ENCODE measurements at regions of chr9 and their contacts with region 1.

Region 1: DNA sequence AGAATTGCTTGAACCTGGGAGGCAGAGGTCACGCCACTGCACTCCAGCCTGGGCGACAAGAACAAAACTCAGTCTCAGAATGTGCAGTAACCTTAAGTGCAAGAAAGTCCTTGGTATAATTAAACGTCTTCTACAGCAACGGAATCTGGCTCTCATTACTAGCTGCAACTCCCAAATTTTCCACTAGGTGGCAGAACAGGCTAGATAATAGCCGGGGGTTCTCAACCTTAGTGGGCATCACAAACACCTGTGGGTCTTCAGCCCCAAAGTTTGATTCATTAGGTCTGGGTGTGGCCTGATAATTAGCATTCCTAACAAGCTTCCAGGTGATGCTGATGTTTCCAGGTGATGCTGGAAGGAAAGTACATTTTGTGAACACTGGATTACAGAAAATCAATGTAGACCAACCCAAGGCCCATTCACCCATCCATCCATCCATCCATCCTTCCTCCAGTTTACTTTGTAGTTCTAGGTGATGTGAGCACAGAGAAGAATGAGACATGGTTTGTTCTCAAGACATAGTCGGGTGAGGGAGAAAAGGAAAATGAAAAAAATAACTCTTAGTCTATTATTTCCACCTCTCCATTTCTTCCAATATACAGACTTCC is 37.3 kb downstream of the FBXW2 start:
- DNase-seq: peak; percentile 26
- ATAC-seq: peak; percentile 85
- H3K4me3 Mint-ChIP-seq: no peak overlapping the region
- H3K27ac Mint-ChIP-seq: no peak overlapping the region
- H3K4me1 Mint-ChIP-seq: peaks cover 24% of the 10 kb centered on the region
- H3K27me3 Mint-ChIP-seq: no peaks in the 10 kb centered on the region
- CTCF ChIP-seq: peak; percentile 71

Region 2: GRCh38 chr9:120619751-120620655 is 135.9 kb before region 1 on chr9:
- CTCF ChIA-PET with region 1: interaction called, 10 read pairs
- POLR2A ChIA-PET with region 1: no interaction called
- intact Hi-C with region 1: loop called (anchors 1 kb)
- DNase-seq: no peak
- ATAC-seq: peak; percentile 79
- H3K4me3 Mint-ChIP-seq: no peak overlapping the region
- H3K27ac Mint-ChIP-seq: no peak overlapping the region
- H3K4me1 Mint-ChIP-seq: peaks cover 2% of the 10 kb centered on the region
- H3K27me3 Mint-ChIP-seq: no peaks in the 10 kb centered on the region
- CTCF ChIP-seq: peak; percentile 99

Region 3: GRCh38 chr9:120783602-120784047 is 27.7 kb after region 1 on chr9:
- CTCF ChIA-PET with region 1: no interaction called
- POLR2A ChIA-PET with region 1: no interaction called
- intact Hi-C with region 1: no loop called
- DNase-seq: no peak
- ATAC-seq: no peak
- H3K4me3 Mint-ChIP-seq: no peak overlapping the region
- H3K27ac Mint-ChIP-seq: no peak overlapping the region
- H3K4me1 Mint-ChIP-seq: peaks cover 18% of the 10 kb centered on the region
- H3K27me3 Mint-ChIP-seq: no peaks in the 10 kb centered on the region
- CTCF ChIP-seq: no peak

Region 4: GRCh38 chr9:120936011-120936763 is 180.3 kb after region 1 on chr9:
- CTCF ChIA-PET with region 1: interaction called, 15 read pairs
- POLR2A ChIA-PET with region 1: no interaction called
- intact Hi-C with region 1: loop called (anchors 1 kb)
- DNase-seq: peak; percentile 72
- ATAC-seq: peak; percentile 37
- H3K4me3 Mint-ChIP-seq: peak overlapping the region; percentile 71
- H3K27ac Mint-ChIP-seq: peak overlapping the region; percentile 82
- H3K4me1 Mint-ChIP-seq: peaks cover 63% of the 10 kb centered on the region
- H3K27me3 Mint-ChIP-seq: no peaks in the 10 kb centered on the region
- CTCF ChIP-seq: peak; percentile 52

Region 5: DNA sequence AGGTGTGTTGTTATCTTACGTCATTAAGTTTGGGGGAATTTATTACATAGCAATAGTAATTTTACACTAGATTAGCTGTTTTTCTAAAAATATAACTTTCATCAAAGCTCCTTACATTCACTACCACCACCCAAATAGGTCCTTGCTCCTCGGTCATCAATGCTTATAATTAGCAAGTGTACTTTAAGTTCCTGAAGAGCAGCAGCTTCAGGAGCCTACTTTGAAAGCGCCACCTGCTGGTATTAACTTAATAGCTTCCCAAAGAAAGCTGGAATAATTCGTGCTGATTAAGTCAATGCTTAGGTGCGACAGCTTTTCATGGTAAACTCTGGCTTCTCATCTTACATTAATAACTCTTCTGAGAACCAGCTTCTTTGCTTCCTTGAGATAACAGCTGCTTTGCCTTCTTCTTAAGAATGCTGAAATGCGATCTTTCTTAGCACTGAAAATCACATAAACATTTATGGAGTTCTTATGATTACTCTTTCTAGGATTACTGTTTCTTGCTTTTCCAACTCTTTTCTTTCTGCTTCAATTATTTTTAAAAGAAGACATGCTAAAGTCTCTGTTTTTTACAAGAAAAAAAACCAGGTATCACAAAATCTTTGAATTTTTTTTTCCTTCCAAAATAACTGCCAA is 304.2 kb after region 1 on chr9:
- CTCF ChIA-PET with region 1: interaction called, 135 read pairs
- POLR2A ChIA-PET with region 1: interaction called, 3 read pairs
- intact Hi-C with region 1: loop called (anchors 1 kb)
- DNase-seq: no peak
- ATAC-seq: peak; percentile 67
- H3K4me3 Mint-ChIP-seq: no peak overlapping the region
- H3K27ac Mint-ChIP-seq: no peak overlapping the region
- H3K4me1 Mint-ChIP-seq: peaks cover 5% of the 10 kb centered on the region
- H3K27me3 Mint-ChIP-seq: no peaks in the 10 kb centered on the region
- CTCF ChIP-seq: peak; percentile 56

Region 6: DNA sequence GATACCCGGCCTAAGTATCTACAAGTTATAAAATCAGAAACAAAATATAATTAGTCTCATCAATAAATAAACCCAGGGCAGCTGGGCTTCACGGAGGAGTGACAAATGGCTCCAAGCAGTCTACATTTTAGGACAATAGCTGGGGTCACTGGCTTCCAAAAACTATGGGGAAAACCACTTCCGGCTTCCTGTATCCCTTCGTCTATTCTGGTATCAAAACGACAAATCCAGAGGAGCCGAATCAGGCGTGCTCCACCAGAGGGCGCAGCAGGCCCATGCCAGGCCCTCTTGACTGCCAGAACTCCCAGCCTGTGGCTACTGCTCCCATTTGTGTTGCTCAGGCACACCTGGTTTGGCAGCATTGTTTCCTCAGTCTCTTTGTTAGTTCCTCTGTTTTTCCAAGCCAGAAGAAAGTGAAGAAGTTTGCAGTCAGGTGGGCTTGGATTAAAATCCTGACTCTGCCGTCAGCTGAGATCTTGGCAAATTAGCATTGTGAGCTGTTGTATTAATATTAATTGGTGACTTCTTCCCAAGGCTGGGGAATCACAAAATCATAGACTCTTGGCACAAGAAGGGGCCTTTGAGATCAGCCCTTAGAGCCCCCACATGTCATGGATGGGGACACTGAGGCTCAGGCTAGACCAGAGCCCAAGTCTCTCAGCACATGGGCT is 457.3 kb after region 1 on chr9:
- CTCF ChIA-PET with region 1: interaction called, 5 read pairs
- POLR2A ChIA-PET with region 1: no interaction called
- intact Hi-C with region 1: loop called (anchors 5 kb)
- DNase-seq: peak; percentile 57
- ATAC-seq: peak; percentile 76
- H3K4me3 Mint-ChIP-seq: no peak overlapping the region
- H3K27ac Mint-ChIP-seq: peak overlapping the region; percentile 59
- H3K4me1 Mint-ChIP-seq: peaks cover 24% of the 10 kb centered on the region
- H3K27me3 Mint-ChIP-seq: no peaks in the 10 kb centered on the region
- CTCF ChIP-seq: peak; percentile 53

Region 7: GRCh38 chr9:121399883-121400607 is 644.1 kb after region 1 on chr9:
- CTCF ChIA-PET with region 1: interaction called, 5 read pairs
- POLR2A ChIA-PET with region 1: no interaction called
- intact Hi-C with region 1: loop called (anchors 1 kb)
- DNase-seq: no peak
- ATAC-seq: peak; percentile 42
- H3K4me3 Mint-ChIP-seq: no peak overlapping the region
- H3K27ac Mint-ChIP-seq: no peak overlapping the region
- H3K4me1 Mint-ChIP-seq: no peaks in the 10 kb centered on the region
- H3K27me3 Mint-ChIP-seq: no peaks in the 10 kb centered on the region
- CTCF ChIP-seq: peak; percentile 77